ENCODE measurements at regions of chr14 and their contacts with region 1.

Region 1: DNA sequence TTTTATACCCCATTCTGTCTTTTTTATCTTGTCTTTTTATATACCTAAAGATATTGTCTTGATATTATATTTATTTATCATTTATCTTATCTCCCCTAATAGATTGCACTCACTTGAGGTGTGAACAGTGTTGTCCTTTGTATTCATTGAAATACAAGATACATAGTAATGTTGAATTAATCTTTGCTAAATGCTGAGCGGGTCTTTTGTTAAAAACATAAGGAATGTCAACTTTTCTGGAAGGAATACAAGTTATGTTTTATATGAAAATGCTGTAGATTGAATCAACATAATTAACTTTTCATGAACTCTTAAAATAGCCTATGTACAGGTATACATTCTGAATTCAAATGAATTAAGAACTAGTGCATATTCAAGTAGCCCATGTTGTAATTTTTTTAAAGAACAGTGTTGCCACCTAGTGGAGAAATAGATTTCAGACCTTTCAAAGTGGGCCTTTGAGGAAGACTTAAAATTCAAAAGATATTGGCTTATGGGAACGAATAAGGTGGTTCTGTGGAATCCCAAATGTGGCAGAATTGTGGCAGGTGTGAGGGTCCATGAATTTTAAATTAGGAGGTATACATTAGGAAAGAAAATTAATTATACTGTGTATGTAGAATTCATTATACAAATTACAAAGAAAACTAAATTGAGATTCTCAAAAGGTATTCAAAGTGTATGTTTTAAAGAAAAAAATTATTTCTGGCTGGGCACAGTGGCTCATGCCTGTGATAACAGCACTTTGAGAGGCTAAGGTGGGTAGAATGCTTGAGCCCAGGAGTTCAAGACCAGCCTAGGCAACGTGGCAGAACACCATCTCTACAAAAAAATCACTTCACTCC is 19.1 kb downstream of the BBOF1 start:
- DNase-seq: no peak
- H3K4me3 ChIP-seq: no peak overlapping the region
- H3K27ac ChIP-seq: no peak overlapping the region
- H3K27me3 ChIP-seq: no peaks in the 10 kb centered on the region
- CTCF ChIP-seq: peak; percentile 67

Region 2: DNA sequence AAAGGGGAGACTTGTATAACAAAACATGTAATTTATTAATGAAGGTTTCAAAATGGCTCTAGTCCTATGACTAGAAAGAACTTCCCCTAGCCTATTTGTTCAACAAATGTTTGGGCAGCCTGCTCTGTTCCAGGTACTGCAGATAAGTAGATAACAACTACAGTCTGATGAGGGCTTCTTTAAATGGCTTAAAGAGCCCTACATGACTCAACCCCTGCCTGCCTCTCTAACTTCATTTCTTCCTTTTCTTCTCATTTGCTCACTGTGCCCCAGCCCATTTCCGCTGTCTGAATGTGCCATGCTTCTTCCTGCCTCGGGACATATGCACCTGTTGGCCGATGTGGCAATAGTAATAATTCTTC is 24.6 kb after region 1 on chr14:
- CTCF ChIA-PET with region 1: interaction called, 10 read pairs
- POLR2A ChIA-PET with region 1: no interaction called
- DNase-seq: no peak
- H3K4me3 ChIP-seq: no peak overlapping the region
- H3K27ac ChIP-seq: no peak overlapping the region
- H3K27me3 ChIP-seq: no peaks in the 10 kb centered on the region
- CTCF ChIP-seq: no peak

Measured in AG04450 (cell line).